ENCODE measurements at regions of chr21 and their contacts with region 1.

Region 1: GRCh38 chr21:36288651-36289243 is 31.2 kb upstream of the MORC3 start:
- DNase-seq: no peak
- H3K4me3 Mint-ChIP-seq: peak overlapping the region; percentile 48
- H3K27ac Mint-ChIP-seq: peak overlapping the region; percentile 91
- H3K4me1 Mint-ChIP-seq: peaks cover 24% of the 10 kb centered on the region
- H3K27me3 Mint-ChIP-seq: no peaks in the 10 kb centered on the region

Region 2: DNA sequence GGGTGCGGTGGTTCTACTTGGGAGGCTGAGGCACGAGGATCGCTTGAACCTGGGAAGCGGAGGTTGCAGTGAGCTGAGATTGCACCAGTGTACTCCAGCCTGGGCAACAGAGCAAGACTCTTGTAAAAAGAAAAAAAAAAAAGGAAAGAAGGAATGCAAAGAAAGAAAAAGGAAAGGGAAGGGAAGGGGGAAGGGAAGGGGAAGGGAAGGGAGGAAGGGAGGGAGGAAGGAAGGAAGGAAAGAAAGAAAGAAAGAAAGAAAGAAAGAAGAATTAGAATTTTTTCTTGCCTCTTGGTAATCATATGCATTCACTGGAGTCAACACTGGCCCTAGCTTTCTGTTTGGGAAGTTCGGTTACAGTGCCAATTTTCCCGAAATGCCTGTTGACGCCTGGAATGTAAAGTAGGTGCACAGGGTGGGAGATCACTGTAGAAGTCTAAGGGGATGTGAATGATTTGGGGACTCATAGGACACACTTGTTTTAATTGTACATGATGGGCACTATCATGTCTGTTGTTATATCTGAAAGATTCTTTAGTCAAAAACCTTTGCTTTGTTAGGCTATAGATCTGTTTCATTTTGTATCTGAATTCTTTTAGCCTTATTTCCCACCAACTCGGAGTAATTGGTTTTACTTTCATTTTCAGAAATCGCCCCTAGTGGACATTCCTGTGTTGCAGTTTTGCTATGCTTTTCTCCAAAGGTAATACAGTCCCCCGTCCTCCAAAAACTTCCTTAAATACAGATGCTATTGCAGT is 28.5 kb before region 1 on chr21:
- CTCF ChIA-PET with region 1: interaction called, 4 read pairs
- intact Hi-C with region 1: loop called (anchors 2 kb)
- DNase-seq: peak; percentile 47
- H3K4me3 Mint-ChIP-seq: peak overlapping the region; percentile 51
- H3K27ac Mint-ChIP-seq: peak overlapping the region; percentile 59
- H3K4me1 Mint-ChIP-seq: peaks cover 16% of the 10 kb centered on the region
- H3K27me3 Mint-ChIP-seq: no peaks in the 10 kb centered on the region

Region 3: DNA sequence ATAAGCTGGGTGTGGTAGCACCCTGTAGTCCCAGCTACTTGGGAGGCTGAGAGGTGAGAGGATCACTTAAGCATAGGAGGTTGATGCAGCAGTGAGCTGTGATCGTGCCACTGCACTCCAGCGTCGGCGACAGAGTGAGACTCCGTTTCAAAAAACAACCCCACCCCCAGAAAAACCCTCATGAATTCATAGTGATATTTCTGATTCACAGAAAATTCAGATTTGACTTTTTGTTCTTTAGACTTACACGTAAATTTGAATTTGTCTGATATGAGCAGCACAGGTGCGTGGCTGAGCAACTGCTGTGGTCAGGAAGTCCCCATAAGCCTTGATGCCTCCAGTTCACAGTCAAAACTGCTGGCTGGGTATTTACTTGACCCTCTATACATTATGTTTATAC is 21.3 kb after region 1 on chr21:
- CTCF ChIA-PET with region 1: interaction called, 6 read pairs
- intact Hi-C with region 1: loop called (anchors 1 kb)
- DNase-seq: peak; percentile 87
- H3K4me3 Mint-ChIP-seq: peak overlapping the region; percentile 27
- H3K27ac Mint-ChIP-seq: peak overlapping the region; percentile 82
- H3K4me1 Mint-ChIP-seq: peaks cover 7% of the 10 kb centered on the region
- H3K27me3 Mint-ChIP-seq: no peaks in the 10 kb centered on the region

Region 4: DNA sequence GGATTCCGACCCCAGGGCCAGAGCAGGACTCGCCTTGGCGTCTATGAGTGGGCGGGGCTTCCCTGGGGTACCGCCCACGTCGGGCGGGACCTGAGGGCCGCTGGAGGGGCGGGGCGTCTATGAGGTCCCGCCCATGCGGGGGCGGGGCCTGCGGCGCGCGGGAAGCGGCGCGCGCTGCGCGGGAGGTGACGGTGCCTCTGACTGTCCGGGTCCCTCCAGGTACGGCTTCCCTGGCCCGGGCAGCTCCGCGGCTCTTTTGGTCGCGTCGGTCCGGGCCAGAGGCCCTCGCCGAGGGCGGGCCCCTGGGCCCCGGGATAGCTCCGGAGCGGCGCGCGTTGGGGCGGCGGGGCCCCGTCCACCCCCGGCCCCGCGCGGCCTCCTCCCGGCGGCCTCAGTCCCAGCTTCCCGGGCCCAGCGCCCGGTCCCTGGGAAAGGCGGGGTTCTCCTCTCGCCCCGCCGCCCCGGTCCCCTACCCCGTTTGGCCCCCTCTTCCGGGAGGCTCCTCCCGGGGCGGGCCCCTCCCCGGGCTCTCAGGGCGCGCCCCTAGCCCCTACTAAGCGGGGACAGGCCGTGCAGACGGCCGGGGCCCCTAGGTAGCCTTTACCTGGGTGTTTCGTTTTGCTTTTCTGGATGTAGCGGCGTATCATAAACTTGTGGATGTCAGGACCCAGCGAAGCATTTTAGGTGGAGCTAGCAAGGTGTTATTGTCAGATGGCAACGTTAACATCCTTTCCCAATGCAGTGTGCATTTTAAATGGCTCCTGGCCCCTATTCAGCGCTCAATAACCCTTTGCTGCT is 96.7 kb after region 1 on chr21 and contains the start of gene CHAF1B:
- CTCF ChIA-PET with region 1: no interaction called
- intact Hi-C with region 1: loop called (anchors 1 kb)
- DNase-seq: peak; percentile 82
- H3K4me3 Mint-ChIP-seq: peak within 1 kb of the TSS; percentile 80
- H3K27ac Mint-ChIP-seq: peak within 1 kb of the TSS; percentile 46
- H3K4me1 Mint-ChIP-seq: peaks cover 20% of the 10 kb centered on the region
- H3K27me3 Mint-ChIP-seq: no peaks in the 10 kb centered on the region
- total RNA-seq, gene CHAF1B: 30.5 to 31.9 TPM